Heart left ventricle (tissue), 16 donors: ENCODE measurements at regions of chr5 and their contacts with region 1.

Region 1: GRCh38 chr5:140042643-140043500 is at the start of gene NRG2:
- DNase-seq: peak; percentile 74 to 88 (median 77)
- ATAC-seq: peak; percentile 80 to 92 (median 86)
- H3K4me3 ChIP-seq: peak within 1 kb of the TSS; percentile 57 to 89 (median 72)
- H3K27ac ChIP-seq: peak within 1 kb of the TSS; percentile 43 to 93 (median 82)
- H3K4me1 ChIP-seq: peaks cover 0 to 48% (median 27%) of the 10 kb centered on the region in 12 donors
- H3K27me3 ChIP-seq: peaks cover 0 to 47% (median 0%) of the 10 kb centered on the region in 9 donors
- CTCF ChIP-seq: peak; percentile 35 to 69 (median 58)
- POLR2A ChIP-seq: peak in 1 of 2 donors; percentile 41
- total RNA-seq, gene NRG2: 1.9 to 4.8 (median 3.4) TPM

Region 2: GRCh38 chr5:139974661-139975060 is 68.2 kb before region 1 on chr5:
- intact Hi-C with region 1: loop called in 3 of 10 experiments (anchors 5 kb)
- DNase-seq: peak in 1 of 5 donors; percentile 6
- ATAC-seq: peak in 2 of 4 donors; percentile 12 to 29
- H3K4me3 ChIP-seq: no peak overlapping the region
- H3K27ac ChIP-seq: no peak overlapping the region
- H3K4me1 ChIP-seq: peaks cover 0 to 30% (median 7%) of the 10 kb centered on the region in 12 donors
- H3K27me3 ChIP-seq: no peaks in the 10 kb centered on the region
- CTCF ChIP-seq: no peak
- POLR2A ChIP-seq: no peak

Region 3: DNA sequence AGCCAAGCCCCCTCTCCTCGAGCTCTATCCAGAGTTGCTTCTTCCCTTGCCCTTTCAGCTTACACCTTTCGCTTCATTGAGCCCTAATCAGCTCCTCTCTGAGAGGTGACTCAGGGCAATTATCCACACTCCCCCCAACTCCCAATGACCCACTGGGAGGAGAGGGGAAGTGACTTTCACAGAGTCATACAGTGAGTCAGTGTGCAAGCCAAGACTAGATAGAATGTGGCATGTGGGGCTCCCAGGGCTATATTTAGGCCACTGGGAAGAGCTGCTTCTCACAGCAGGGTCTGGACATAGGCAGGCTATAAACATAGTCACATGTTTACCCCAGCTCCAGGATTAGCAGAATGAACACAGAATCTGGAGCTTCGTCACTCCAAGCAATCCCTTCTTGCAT is 57.1 kb before region 1 on chr5:
- intact Hi-C with region 1: loop called in 5 of 10 experiments (anchors 5 to 10 kb)
- DNase-seq: peak in 3 of 5 donors; percentile 37 to 62 (median 61)
- ATAC-seq: peak; percentile 89 to 96 (median 94)
- H3K4me3 ChIP-seq: no peak overlapping the region
- H3K27ac ChIP-seq: peak overlapping the region in 11 of 12 donors; percentile 24 to 73 (median 67)
- H3K4me1 ChIP-seq: peaks cover 0 to 41% (median 18%) of the 10 kb centered on the region in 12 donors
- H3K27me3 ChIP-seq: no peaks in the 10 kb centered on the region
- CTCF ChIP-seq: no peak
- POLR2A ChIP-seq: no peak

Region 4: GRCh38 chr5:140000332-140000731 is 42.5 kb before region 1 on chr5:
- intact Hi-C with region 1: loop called in 4 of 10 experiments (anchors 5 kb)
- DNase-seq: peak; percentile 45 to 82 (median 70)
- ATAC-seq: peak; percentile 80 to 92 (median 86)
- H3K4me3 ChIP-seq: peak overlapping the region in 2 of 12 donors; percentile 18 to 20
- H3K27ac ChIP-seq: peak overlapping the region in 11 of 12 donors; percentile 33 to 85 (median 76)
- H3K4me1 ChIP-seq: peaks cover 0 to 48% (median 12%) of the 10 kb centered on the region in 12 donors
- H3K27me3 ChIP-seq: no peaks in the 10 kb centered on the region
- CTCF ChIP-seq: no peak
- POLR2A ChIP-seq: no peak